ENCODE measurements at regions of chr17 and their contacts with region 1.

Region 1: DNA sequence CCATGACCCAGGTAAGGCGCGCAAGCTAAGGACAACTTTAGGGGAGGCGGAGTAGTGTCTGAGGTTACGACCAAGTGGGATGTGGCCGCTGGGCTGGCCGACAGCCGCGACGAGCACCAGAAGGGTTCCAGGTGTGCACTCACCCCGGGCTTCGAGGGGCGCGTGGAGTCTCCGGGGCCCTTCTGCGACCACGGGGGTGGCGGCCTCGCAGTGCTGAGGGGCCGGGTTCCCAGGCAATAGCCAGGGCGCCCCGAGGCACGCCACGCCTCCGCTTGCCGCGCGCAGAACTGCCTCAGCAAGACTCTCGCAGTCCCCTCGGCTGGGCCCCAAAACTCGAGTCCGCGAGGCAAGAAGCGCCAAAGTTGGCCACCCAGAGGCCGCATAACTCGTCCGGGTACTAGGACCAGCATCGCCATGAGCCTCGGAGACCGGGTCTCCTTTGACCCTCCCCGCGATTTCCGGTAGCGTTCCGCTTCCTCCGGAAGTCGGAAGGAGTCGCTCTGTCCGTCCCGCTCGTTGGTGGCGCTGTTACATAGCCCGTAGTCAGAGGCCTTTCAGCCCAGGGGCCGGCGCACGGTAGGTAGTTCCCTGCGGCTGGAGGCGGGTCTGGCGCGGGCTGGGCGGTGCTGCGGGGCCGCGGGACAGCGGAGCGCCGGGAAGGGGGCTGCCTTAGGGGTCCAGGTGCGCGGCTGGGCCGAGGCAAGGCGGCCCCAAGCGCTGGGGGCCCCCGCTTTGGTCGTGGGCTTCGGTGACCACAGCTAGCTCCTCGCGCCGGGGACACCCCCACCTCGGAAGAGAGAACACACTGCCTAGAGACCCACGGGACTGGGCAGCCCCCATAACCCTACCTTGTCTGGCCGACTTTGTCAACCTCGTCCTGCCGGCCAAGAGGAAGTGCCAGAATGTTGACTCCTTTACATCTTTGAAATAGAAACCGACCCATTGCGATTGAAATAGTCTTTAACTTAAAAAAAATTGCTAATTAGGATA is at the starts of genes ADPRM and SCO1:
- DNase-seq: peak; percentile 76 to 95 (median 86)
- ATAC-seq: peak; percentile 84
- H3K4me3 ChIP-seq: peak within 1 kb of the TSS; percentile 81
- H3K4me3 Mint-ChIP-seq: peak within 1 kb of the TSS; percentile 94
- H3K27ac ChIP-seq: peak within 1 kb of the TSS; percentile 84 to 95
- H3K27ac Mint-ChIP-seq: peak within 1 kb of the TSS; percentile 95
- H3K4me1 ChIP-seq: peaks cover 39% of the 10 kb centered on the region
- H3K4me1 Mint-ChIP-seq: peaks cover 70% of the 10 kb centered on the region
- H3K27me3 ChIP-seq: no peaks in the 10 kb centered on the region
- H3K27me3 Mint-ChIP-seq: no peaks in the 10 kb centered on the region
- CTCF ChIP-seq: no peak
- total RNA-seq, gene ADPRM: 34.2 to 35.0 TPM
- total RNA-seq, gene SCO1: 15.3 to 18.2 TPM

Region 2: GRCh38 chr17:8798846-8799569 is 1898.4 kb before region 1 on chr17 and contains the start of gene MFSD6L:
- CTCF ChIA-PET with region 1: no interaction called
- POLR2A ChIA-PET with region 1: no interaction called
- intact Hi-C with region 1: no loop called
- DNase-seq: peak in 2 of 14 experiments; percentile 8 to 17
- ATAC-seq: no peak
- H3K4me3 ChIP-seq: no peak within 1 kb of the TSS
- H3K4me3 Mint-ChIP-seq: no peak within 1 kb of the TSS
- H3K27ac ChIP-seq: no peak within 1 kb of the TSS
- H3K27ac Mint-ChIP-seq: no peak within 1 kb of the TSS
- H3K4me1 ChIP-seq: no peaks in the 10 kb centered on the region
- H3K4me1 Mint-ChIP-seq: no peaks in the 10 kb centered on the region
- H3K27me3 ChIP-seq: no peaks in the 10 kb centered on the region
- H3K27me3 Mint-ChIP-seq: peaks cover 5% of the 10 kb centered on the region
- CTCF ChIP-seq: no peak
- total RNA-seq, gene MFSD6L: 0.22 TPM in 1 of 2 experiments, not detected in the other

Region 3: GRCh38 chr17:10683853-10684252 is 13.5 kb before region 1 on chr17:
- CTCF ChIA-PET with region 1: interaction called, 10 read pairs
- POLR2A ChIA-PET with region 1: interaction called, 4 read pairs
- intact Hi-C with region 1: no loop called
- DNase-seq: peak in 3 of 14 experiments; percentile 11 to 30 (median 28)
- ATAC-seq: no peak
- H3K4me3 ChIP-seq: no peak overlapping the region
- H3K4me3 Mint-ChIP-seq: no peak overlapping the region
- H3K27ac ChIP-seq: no peak overlapping the region
- H3K27ac Mint-ChIP-seq: no peak overlapping the region
- H3K4me1 ChIP-seq: no peaks in the 10 kb centered on the region
- H3K4me1 Mint-ChIP-seq: peaks cover 7% of the 10 kb centered on the region
- H3K27me3 ChIP-seq: no peaks in the 10 kb centered on the region
- H3K27me3 Mint-ChIP-seq: no peaks in the 10 kb centered on the region
- CTCF ChIP-seq: peak; percentile 55

Region 4: GRCh38 chr17:12020642-12021622 is 1323.5 kb after region 1 on chr17 and contains the start of gene MAP2K4:
- CTCF ChIA-PET with region 1: no interaction called
- POLR2A ChIA-PET with region 1: no interaction called
- intact Hi-C with region 1: loop called in 1 of 2 experiments (anchors 5 kb)
- DNase-seq: peak; percentile 86 to 99 (median 95)
- ATAC-seq: peak; percentile 95
- H3K4me3 ChIP-seq: peak within 1 kb of the TSS; percentile 58
- H3K4me3 Mint-ChIP-seq: peak within 1 kb of the TSS; percentile 91
- H3K27ac ChIP-seq: peak within 1 kb of the TSS in 1 of 2 donors; percentile 26
- H3K27ac Mint-ChIP-seq: peak within 1 kb of the TSS; percentile 77
- H3K4me1 ChIP-seq: peaks cover 13% of the 10 kb centered on the region
- H3K4me1 Mint-ChIP-seq: peaks cover 55% of the 10 kb centered on the region
- H3K27me3 ChIP-seq: no peaks in the 10 kb centered on the region
- H3K27me3 Mint-ChIP-seq: peaks cover 6% of the 10 kb centered on the region
- CTCF ChIP-seq: no peak
- total RNA-seq, gene MAP2K4: 22.4 to 22.6 TPM